Stomach (tissue), 19 donors: ENCODE measurements at regions of chr1 and their contacts with region 1.

Region 1: DNA sequence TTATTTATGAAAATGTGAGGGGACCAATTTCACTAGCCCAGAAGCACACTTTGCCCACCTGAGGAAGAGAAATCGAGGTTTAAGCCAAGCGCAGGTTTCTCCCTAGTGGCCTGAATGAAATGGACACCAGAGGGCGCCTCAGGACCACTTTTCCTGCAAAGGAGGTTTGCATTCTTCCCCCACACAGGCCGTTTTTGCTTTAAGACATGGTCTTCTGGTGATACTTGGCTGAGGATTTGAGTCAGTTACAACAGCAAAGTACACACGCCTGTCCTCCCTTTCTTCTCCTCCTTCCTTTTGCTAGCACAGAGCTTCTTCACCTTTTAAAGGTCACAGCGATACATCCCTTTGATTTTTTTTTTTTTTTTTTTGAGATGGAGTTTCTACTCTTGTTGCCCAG is 5.4 kb downstream of the PLA2G2E start:
- DNase-seq: peak; percentile 85 to 93
- H3K4me3 ChIP-seq: no peak overlapping the region
- H3K27ac ChIP-seq: no peak overlapping the region
- H3K4me1 ChIP-seq: peaks cover 0 to 5% (median 2%) of the 10 kb centered on the region in 4 donors
- H3K27me3 ChIP-seq: peaks cover 0 to 6% (median 0%) of the 10 kb centered on the region in 3 donors
- CTCF ChIP-seq: peak in 6 of 7 experiments; percentile 26 to 91 (median 83)
- EP300 ChIP-seq: no peak
- POLR2A ChIP-seq: no peak

Region 2: DNA sequence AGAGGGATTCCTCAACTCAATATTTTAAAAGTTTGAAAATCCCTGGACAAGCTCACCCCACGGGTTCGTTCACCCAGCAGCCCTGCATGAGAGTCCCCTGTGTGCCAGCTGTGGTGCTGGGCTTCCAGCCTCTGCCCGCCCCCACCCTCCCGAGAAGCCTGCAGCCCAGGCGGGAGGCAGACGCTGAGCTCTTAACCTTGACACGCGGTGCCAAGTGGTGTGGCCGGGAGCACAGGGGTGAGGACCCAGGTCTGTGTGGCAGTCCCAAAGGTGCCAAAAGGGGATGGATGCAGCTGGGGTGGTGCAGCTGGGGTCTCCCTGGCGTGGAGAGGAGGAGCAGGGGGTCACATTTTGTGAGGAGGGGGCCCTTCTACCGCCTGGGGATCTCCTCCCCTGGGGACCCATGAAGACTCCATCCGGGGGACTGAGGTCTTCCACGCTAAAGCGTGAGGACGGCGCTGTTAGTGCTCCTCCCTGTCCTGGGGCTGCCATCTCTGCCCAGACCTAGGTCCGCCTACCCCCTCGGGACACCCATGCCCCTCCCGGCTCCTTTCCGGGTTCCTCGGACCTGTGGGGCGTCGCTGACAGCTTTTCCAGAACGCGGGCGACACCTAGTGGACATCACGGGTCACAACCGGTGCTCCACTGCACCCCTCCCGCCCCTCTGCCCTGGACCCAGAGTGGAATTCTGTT is 234.0 kb after region 1 on chr1:
- intact Hi-C with region 1: loop called (anchors 5 kb)
- DNase-seq: peak; percentile 84 to 92
- H3K4me3 ChIP-seq: peak overlapping the region; percentile 33 to 47 (median 40)
- H3K27ac ChIP-seq: peak overlapping the region in 1 of 5 donors; percentile 63
- H3K4me1 ChIP-seq: peaks cover 7 to 33% (median 23%) of the 10 kb centered on the region in 4 donors
- H3K27me3 ChIP-seq: peaks cover 0 to 16% (median 0%) of the 10 kb centered on the region in 3 donors
- CTCF ChIP-seq: peak in 5 of 7 experiments; percentile 83 to 95 (median 87)
- EP300 ChIP-seq: no peak
- POLR2A ChIP-seq: no peak

Region 3: GRCh38 chr1:20361806-20362640 is 444.0 kb after region 1 on chr1:
- intact Hi-C with region 1: loop called (anchors 10 kb)
- DNase-seq: peak; percentile 32 to 72
- H3K4me3 ChIP-seq: no peak overlapping the region
- H3K27ac ChIP-seq: no peak overlapping the region
- H3K4me1 ChIP-seq: peaks cover 12 to 39% (median 30%) of the 10 kb centered on the region in 4 donors
- H3K27me3 ChIP-seq: peaks cover 10 to 89% (median 54%) of the 10 kb centered on the region in 3 donors
- CTCF ChIP-seq: peak in 5 of 7 experiments; percentile 11 to 50 (median 34)
- EP300 ChIP-seq: no peak
- POLR2A ChIP-seq: no peak